ENCODE measurements at regions of chr9 and their contacts with region 1.

Region 1: DNA sequence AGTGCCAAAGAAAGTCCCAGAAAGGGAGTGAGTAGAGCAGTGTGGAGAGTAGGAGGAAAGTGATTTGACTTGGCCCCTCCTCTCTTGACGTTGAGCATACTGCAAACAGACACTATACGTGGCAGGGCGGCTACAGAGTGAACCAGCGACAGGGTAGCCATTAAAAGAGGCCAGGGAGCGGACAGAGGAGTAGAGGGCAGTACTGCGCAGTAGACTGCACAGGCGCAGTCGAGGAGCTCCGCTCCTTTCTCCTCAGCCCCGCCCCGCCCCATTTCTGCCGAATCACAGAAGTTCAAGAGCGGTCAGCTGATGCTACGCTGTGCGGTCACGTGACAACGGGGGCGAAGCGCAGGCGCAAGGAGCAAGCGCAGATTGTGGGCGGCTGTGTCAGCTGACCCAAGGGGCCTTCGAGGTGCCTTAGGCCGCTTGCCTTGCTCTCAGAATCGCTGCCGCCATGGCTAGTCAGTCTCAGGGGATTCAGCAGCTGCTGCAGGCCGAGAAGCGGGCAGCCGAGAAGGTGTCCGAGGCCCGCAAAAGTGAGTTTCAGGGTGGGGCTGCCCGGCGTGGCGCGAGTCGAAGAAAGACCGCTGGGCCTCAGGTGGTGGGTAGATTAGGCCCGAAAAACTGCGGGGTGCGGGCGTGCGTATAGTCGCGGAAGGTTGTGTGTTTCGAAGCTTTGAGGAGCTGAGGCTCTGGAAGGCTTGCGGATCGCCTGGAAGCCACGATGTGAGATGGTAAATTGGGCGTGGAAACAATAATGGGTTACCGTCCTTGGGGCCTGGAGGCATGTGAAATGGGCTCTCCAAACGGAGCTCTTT is at the start of gene ATP6V1G1:
- DNase-seq: peak; percentile 97
- ATAC-seq: peak; percentile 97
- H3K4me3 ChIP-seq: peak within 1 kb of the TSS; percentile 84 to 96 (median 92)
- H3K27ac ChIP-seq: peak within 1 kb of the TSS; percentile 95
- H3K4me1 ChIP-seq: peaks cover 51% of the 10 kb centered on the region
- H3K27me3 ChIP-seq: peaks cover 0 to 4% of the 10 kb centered on the region in 2 experiments; a peak in 2 of 5 replicates
- CTCF ChIP-seq: peak; percentile 46
- EP300 ChIP-seq: peak in 1 of 2 experiments; percentile 15; a peak in 1 of 4 replicates
- POLR2A ChIP-seq: peak; percentile 93 to 97
- RAD21 ChIP-seq: no peak; the same call in 1 of the 2 replicates
- total RNA-seq, gene ATP6V1G1: 158 and 215 TPM in 2 replicates

Region 2: GRCh38 chr9:114505187-114506081 is 82.2 kb before region 1 on chr9 and contains the start of gene WHRN:
- CTCF ChIA-PET with region 1: no interaction called
- POLR2A ChIA-PET with region 1: interaction called, 32 read pairs
- in situ Hi-C with region 1: no loop called
- intact Hi-C with region 1: loop called (anchors 1 kb)
- DNase-seq: peak; percentile 77
- ATAC-seq: peak; percentile 80
- H3K4me3 ChIP-seq: peak within 1 kb of the TSS; percentile 76 to 80 (median 77)
- H3K27ac ChIP-seq: peak within 1 kb of the TSS; percentile 17
- H3K4me1 ChIP-seq: peaks cover 38% of the 10 kb centered on the region
- H3K27me3 ChIP-seq: peaks cover 0 to 23% of the 10 kb centered on the region in 2 experiments; a peak in 3 of 5 replicates
- CTCF ChIP-seq: 0 out of 2 replicates have a peak, but pooled peaks have one; percentile 6
- EP300 ChIP-seq: no peak
- POLR2A ChIP-seq: peak; percentile 77 to 81
- RAD21 ChIP-seq: no peak
- total RNA-seq, gene WHRN: 1.8 and 2.3 TPM in 2 replicates

Region 3: GRCh38 chr9:114551883-114552685 is 35.5 kb before region 1 on chr9:
- CTCF ChIA-PET with region 1: no interaction called
- POLR2A ChIA-PET with region 1: interaction called, 10 read pairs
- in situ Hi-C with region 1: no loop called
- intact Hi-C with region 1: no loop called
- DNase-seq: peak; percentile 69
- ATAC-seq: peak; percentile 92
- H3K4me3 ChIP-seq: no peak overlapping the region
- H3K27ac ChIP-seq: no peak overlapping the region
- H3K4me1 ChIP-seq: no peaks in the 10 kb centered on the region
- H3K27me3 ChIP-seq: peaks cover 0 to 1% of the 10 kb centered on the region in 2 experiments; a peak in 1 of 5 replicates
- CTCF ChIP-seq: no peak
- EP300 ChIP-seq: no peak
- POLR2A ChIP-seq: no peak
- RAD21 ChIP-seq: no peak

Region 4: DNA sequence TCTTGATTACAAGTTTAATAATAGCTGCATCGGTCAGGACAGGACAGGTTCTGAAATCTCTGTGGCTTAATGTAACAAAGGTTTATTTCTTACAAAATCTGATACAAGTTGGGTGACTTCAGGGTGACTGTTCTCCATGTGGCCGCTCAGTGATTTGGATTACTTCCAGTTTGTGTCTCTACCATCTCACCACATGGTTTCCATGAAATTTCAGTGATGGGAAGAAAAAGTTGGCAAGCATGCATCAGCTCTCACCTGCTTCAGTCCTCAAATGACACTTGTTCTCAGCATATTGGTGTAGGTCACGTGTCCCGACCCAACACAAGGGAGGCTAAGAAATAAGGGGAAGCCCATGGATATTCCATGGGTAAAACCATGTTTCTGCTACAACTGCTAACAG is 15.7 kb after region 1 on chr9:
- CTCF ChIA-PET with region 1: no interaction called
- POLR2A ChIA-PET with region 1: interaction called, 25 read pairs
- in situ Hi-C with region 1: no loop called
- intact Hi-C with region 1: no loop called
- DNase-seq: no peak
- ATAC-seq: no peak
- H3K4me3 ChIP-seq: no peak overlapping the region
- H3K27ac ChIP-seq: no peak overlapping the region
- H3K4me1 ChIP-seq: peaks cover 21% of the 10 kb centered on the region
- H3K27me3 ChIP-seq: no peaks in the 10 kb centered on the region
- CTCF ChIP-seq: no peak
- EP300 ChIP-seq: no peak
- POLR2A ChIP-seq: no peak
- RAD21 ChIP-seq: no peak

Region 5: GRCh38 chr9:114662081-114662989 is 74.7 kb after region 1 on chr9:
- CTCF ChIA-PET with region 1: no interaction called
- POLR2A ChIA-PET with region 1: no interaction called
- in situ Hi-C with region 1: no loop called
- intact Hi-C with region 1: no loop called
- DNase-seq: peak; percentile 22
- ATAC-seq: peak; percentile 96
- H3K4me3 ChIP-seq: no peak overlapping the region
- H3K27ac ChIP-seq: no peak overlapping the region
- H3K4me1 ChIP-seq: no peaks in the 10 kb centered on the region
- H3K27me3 ChIP-seq: peaks cover 0 to 27% of the 10 kb centered on the region in 2 experiments; a peak in 3 of 5 replicates
- CTCF ChIP-seq: peak; percentile 77
- EP300 ChIP-seq: no peak
- POLR2A ChIP-seq: no peak
- RAD21 ChIP-seq: peak; percentile 56

Region 6: DNA sequence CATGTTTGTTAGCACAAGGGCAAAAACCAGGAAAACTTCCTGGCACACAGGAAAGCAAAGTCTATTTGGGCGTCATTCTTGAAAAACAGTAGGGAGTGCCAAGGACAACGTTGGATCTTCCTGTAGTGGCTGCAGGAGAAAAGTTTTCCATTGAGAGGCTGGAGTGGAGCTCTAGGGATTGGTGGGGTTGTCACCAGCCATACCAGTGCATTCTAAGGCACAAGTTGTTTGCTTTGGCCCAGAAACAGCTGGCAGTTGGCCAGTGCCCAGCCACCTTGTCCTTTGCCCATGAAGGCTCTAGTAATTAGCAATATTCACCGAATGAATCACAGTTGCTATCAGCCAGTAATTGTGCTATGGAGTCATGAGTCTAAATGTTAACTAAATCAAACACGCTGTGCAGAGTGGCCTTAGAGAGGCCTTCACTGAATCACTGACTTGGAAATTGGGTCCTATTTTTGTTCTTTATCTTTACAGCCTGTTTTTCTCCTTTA is 191.8 kb after region 1 on chr9:
- CTCF ChIA-PET with region 1: no interaction called
- POLR2A ChIA-PET with region 1: no interaction called
- in situ Hi-C with region 1: no loop called
- intact Hi-C with region 1: no loop called
- DNase-seq: no peak
- ATAC-seq: no peak
- H3K4me3 ChIP-seq: no peak overlapping the region
- H3K27ac ChIP-seq: no peak overlapping the region
- H3K4me1 ChIP-seq: no peaks in the 10 kb centered on the region
- H3K27me3 ChIP-seq: no peaks in the 10 kb centered on the region; a peak in 1 of 5 replicates
- CTCF ChIP-seq: no peak
- EP300 ChIP-seq: no peak
- POLR2A ChIP-seq: no peak
- RAD21 ChIP-seq: no peak